ENCODE measurements at regions of chr3 and their contacts with region 1.

Region 1: DNA sequence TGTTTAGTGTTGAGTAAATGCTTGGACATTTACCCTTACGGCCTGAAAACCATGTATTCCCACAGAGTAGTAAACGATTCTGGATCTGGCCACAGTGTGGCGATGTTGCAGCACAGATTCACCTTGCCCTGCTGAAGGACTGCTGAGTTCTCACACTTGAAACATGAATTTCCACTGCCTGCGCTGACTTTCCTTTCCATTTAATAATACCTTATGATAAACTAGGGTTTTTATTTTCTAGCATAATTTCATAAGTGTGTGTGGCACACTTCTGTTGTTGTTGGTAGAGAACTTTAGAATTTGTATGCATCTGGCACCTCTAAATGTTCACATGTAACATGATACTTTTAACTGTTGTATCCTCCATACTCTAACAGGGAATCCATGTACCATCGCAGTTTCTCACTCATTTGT is 53.9 kb downstream of the C3orf38 start:
- DNase-seq: peak; percentile 5 to 44
- ATAC-seq: peak; percentile 73 to 86
- H3K4me3 ChIP-seq: peak overlapping the region in 1 of 4 donors; percentile 14
- H3K27ac ChIP-seq: no peak overlapping the region
- H3K4me1 ChIP-seq: no peaks in the 10 kb centered on the region
- H3K27me3 ChIP-seq: no peaks in the 10 kb centered on the region
- CTCF ChIP-seq: peak; percentile 30 to 79 (median 60)
- POLR2A ChIP-seq: no peak

Region 2: GRCh38 chr3:87167628-87168456 is 1035.8 kb before region 1 on chr3:
- in situ Hi-C with region 1: no loop called
- intact Hi-C with region 1: no loop called
- DNase-seq: no peak
- ATAC-seq: no peak
- H3K4me3 ChIP-seq: peak overlapping the region; percentile 34 to 49 (median 42)
- H3K27ac ChIP-seq: no peak overlapping the region
- H3K4me1 ChIP-seq: no peaks in the 10 kb centered on the region
- H3K27me3 ChIP-seq: no peaks in the 10 kb centered on the region
- CTCF ChIP-seq: peak in 4 of 5 experiments; percentile 33 to 65 (median 52)
- POLR2A ChIP-seq: no peak

Region 3: DNA sequence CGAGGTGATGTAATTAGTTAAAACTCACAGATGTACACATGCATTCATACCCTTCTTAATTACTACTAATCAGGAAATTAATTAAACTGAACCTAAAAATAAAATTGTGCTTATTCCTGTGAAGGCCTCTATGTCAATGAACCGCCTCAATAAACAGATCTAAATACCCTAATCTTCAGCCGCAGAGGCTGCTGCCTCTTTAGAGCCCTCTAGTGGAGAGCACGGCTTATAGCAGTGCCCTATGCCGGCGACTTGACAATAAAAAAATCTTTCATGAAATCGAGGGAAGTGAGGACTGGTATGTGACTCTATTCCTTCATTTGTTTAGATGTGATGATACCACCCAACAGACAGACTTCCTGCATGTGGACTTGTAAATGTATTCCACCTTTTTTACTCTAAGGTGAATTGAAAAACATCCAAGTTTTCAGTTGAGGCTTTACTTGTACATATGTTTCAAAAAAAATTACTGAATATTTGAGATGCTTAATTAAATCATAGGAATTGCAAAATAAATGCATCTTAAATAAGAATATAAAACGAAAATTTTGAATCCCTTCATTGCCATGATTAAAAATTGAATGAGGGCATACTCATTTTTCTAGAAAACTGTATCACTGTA is 895.4 kb after region 1 on chr3:
- in situ Hi-C with region 1: loop called in 1 of 4 experiments (anchors 25 kb)
- intact Hi-C with region 1: loop called (anchors 5 kb)
- DNase-seq: peak in 1 of 2 donors; percentile 9
- ATAC-seq: no peak
- H3K4me3 ChIP-seq: no peak overlapping the region
- H3K27ac ChIP-seq: no peak overlapping the region
- H3K4me1 ChIP-seq: no peaks in the 10 kb centered on the region
- H3K27me3 ChIP-seq: no peaks in the 10 kb centered on the region
- CTCF ChIP-seq: peak; percentile 31 to 77 (median 44)
- POLR2A ChIP-seq: no peak

Region 4: GRCh38 chr3:90091204-90091924 is 1887.7 kb after region 1 on chr3:
- in situ Hi-C with region 1: loop called in 2 of 4 experiments (anchors 25 kb)
- intact Hi-C with region 1: no loop called
- DNase-seq: no peak
- ATAC-seq: no peak
- H3K4me3 ChIP-seq: no peak overlapping the region
- H3K27ac ChIP-seq: no peak overlapping the region
- H3K4me1 ChIP-seq: no peaks in the 10 kb centered on the region
- H3K27me3 ChIP-seq: no peaks in the 10 kb centered on the region
- CTCF ChIP-seq: peak in 2 of 5 experiments; percentile 9 to 30
- POLR2A ChIP-seq: no peak

Region 5: DNA sequence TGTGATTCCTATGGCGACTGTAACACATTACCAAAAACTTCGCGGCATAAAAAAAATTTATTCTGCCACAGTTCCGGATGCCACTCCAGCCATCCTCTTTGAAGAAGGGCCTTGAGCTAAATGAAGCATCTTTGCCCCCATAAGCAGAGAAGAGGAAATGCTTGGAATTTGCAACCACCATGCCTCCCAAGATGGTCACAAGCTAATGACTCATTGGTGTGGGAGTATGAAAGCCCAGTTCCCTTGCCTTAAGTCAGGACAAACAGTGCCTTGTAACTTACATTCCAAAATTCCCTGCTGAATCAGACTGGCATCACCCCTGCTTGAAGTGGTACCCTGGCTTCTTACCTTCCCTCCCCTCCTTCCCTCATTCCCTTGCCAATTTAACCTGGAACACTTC is 1981.2 kb after region 1 on chr3:
- in situ Hi-C with region 1: loop called (anchors 10 to 25 kb)
- intact Hi-C with region 1: loop called (anchors 10 kb)
- DNase-seq: no peak
- ATAC-seq: no peak
- H3K4me3 ChIP-seq: no peak overlapping the region
- H3K27ac ChIP-seq: no peak overlapping the region
- H3K4me1 ChIP-seq: no peaks in the 10 kb centered on the region
- H3K27me3 ChIP-seq: no peaks in the 10 kb centered on the region
- CTCF ChIP-seq: no peak
- POLR2A ChIP-seq: no peak